B cell (primary cell): ENCODE measurements at regions of chr16 and their contacts with region 1.

Region 1: DNA sequence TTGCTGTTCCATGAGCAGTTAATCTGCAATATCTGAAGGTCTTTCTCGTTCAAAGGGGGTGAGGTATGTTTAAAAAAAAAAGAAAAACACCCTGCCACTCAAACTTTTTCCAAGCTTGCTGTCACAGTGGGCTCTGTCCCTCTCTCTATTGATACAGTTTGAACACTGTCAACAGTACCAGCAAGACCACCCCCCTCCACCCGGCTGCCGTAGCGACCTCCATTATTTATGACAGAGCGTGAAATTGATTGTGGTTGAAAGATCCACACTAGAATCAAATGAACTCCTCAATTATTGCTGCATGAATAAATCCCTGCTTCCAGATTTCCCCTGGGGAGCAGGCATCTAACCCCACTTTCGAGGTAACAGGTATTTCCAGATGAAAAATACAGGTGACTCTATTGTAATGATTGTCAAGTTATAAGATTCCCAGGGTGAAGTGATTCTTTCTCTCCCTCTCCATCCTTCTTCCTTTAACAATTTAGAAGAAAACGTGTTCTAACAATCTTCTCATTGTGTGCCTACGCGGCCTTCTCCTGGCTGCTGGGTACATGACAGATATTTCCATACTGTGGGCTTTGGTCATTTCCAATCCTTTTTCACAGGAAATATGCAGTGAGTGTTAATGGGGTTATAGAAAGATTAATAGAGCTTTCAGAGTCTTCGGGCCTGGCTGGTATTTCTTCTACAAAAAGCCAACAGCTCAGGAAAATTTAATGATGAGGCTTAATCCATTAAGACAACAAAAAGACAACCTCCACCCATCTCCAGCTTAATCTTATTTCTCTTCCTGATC is 135.7 kb upstream of the C16orf82 start:
- DNase-seq: no peak
- ATAC-seq: no peak
- H3K4me3 ChIP-seq: no peak overlapping the region
- H3K4me3 Mint-ChIP-seq: no peak overlapping the region
- H3K27ac ChIP-seq: no peak overlapping the region
- H3K27ac Mint-ChIP-seq: no peak overlapping the region
- H3K4me1 ChIP-seq: no peaks in the 10 kb centered on the region
- H3K4me1 Mint-ChIP-seq: no peaks in the 10 kb centered on the region
- H3K27me3 ChIP-seq: no peaks in the 10 kb centered on the region
- H3K27me3 Mint-ChIP-seq: peaks cover 3% of the 10 kb centered on the region
- CTCF ChIP-seq: no peak

Region 2: GRCh38 chr16:26951947-26952346 is 21.0 kb after region 1 on chr16:
- CTCF ChIA-PET with region 1: no interaction called
- POLR2A ChIA-PET with region 1: no interaction called
- intact Hi-C with region 1: loop called (anchors 2 kb)
- DNase-seq: no peak
- ATAC-seq: no peak
- H3K4me3 ChIP-seq: no peak overlapping the region
- H3K4me3 Mint-ChIP-seq: no peak overlapping the region
- H3K27ac ChIP-seq: no peak overlapping the region
- H3K27ac Mint-ChIP-seq: no peak overlapping the region
- H3K4me1 ChIP-seq: no peaks in the 10 kb centered on the region
- H3K4me1 Mint-ChIP-seq: no peaks in the 10 kb centered on the region
- H3K27me3 ChIP-seq: peaks cover 0 to 5% (median 0%) of the 10 kb centered on the region in 4 experiments
- H3K27me3 Mint-ChIP-seq: peaks cover 18% of the 10 kb centered on the region
- CTCF ChIP-seq: no peak

Region 3: DNA sequence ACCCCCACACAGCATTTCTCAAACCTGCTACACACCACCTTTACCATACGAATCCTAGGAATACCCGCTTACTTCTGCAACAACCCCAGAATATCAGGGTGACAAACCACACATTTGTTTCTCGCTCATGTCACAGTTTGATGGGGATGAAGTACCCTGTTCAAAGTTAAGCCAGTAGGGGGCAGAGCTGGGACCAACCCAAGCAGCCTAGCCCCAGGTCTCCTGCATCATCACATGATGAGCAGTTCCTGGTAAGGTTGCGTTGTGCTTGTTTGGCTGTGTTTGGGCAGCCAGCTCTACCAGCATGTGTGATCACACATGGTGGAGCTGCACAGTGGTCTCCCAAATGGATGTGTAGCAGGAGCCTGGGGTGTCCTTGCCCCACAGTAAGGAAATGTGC is 32.1 kb after region 1 on chr16:
- CTCF ChIA-PET with region 1: no interaction called
- POLR2A ChIA-PET with region 1: no interaction called
- intact Hi-C with region 1: no loop called
- DNase-seq: no peak
- ATAC-seq: no peak
- H3K4me3 ChIP-seq: no peak overlapping the region
- H3K4me3 Mint-ChIP-seq: no peak overlapping the region
- H3K27ac ChIP-seq: no peak overlapping the region
- H3K27ac Mint-ChIP-seq: no peak overlapping the region
- H3K4me1 ChIP-seq: no peaks in the 10 kb centered on the region
- H3K4me1 Mint-ChIP-seq: no peaks in the 10 kb centered on the region
- H3K27me3 ChIP-seq: peaks cover 0 to 2% (median 0%) of the 10 kb centered on the region in 4 experiments
- H3K27me3 Mint-ChIP-seq: peaks cover 5% of the 10 kb centered on the region
- CTCF ChIP-seq: no peak

Region 4: DNA sequence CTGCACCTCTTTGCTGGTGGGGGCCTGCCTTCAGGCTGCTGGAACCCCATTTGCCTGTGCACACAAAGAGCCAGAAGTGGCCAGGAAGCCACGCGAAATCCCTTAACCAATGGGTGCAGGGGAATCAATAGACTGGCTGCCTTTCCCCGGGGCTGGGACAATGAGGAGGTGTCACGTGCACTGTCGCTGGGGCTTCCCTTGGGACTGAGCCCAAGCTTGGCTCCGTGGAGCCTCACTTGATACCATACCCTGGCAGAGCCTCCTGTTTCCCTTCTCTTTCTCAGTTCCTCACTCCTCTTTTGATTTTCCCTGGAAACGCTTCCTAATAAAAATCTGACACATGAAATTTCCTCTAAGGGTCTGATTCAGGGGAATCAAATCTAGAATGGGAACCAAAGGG is 97.0 kb after region 1 on chr16:
- CTCF ChIA-PET with region 1: no interaction called
- POLR2A ChIA-PET with region 1: no interaction called
- intact Hi-C with region 1: no loop called
- DNase-seq: no peak
- ATAC-seq: no peak
- H3K4me3 ChIP-seq: no peak overlapping the region
- H3K4me3 Mint-ChIP-seq: no peak overlapping the region
- H3K27ac ChIP-seq: no peak overlapping the region
- H3K27ac Mint-ChIP-seq: no peak overlapping the region
- H3K4me1 ChIP-seq: no peaks in the 10 kb centered on the region
- H3K4me1 Mint-ChIP-seq: no peaks in the 10 kb centered on the region
- H3K27me3 ChIP-seq: no peaks in the 10 kb centered on the region
- H3K27me3 Mint-ChIP-seq: peaks cover 9% of the 10 kb centered on the region
- CTCF ChIP-seq: no peak